ENCODE measurements at regions of chr20 and their contacts with region 1.

Region 1: DNA sequence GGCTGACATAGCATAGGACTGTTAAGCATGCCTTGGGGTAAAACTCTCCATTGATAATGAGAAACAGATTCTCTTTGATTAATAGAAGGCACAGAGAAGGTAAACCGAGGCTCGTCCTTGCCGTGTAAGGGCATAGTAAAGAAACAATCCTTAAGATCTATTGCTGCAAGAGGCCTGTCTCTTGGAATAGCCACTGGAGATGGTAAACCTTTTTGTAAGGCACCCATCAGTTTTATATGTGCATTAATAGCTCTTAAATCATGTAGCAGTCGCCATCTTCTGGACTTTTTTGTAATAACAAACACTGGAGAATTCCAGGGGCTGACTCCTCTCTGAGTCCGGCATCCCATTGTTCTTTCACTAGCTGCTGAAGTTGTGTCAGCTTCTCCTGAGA is 8.4 kb upstream of the ABHD12 start:
- DNase-seq: peak in 1 of 2 donors; percentile 26
- ATAC-seq: peak; percentile 86 to 92
- H3K4me3 ChIP-seq: no peak overlapping the region
- H3K27ac ChIP-seq: no peak overlapping the region
- H3K4me1 ChIP-seq: no peaks in the 10 kb centered on the region
- H3K27me3 ChIP-seq: no peaks in the 10 kb centered on the region
- CTCF ChIP-seq: peak; percentile 30 to 63 (median 55)
- POLR2A ChIP-seq: no peak

Region 2: DNA sequence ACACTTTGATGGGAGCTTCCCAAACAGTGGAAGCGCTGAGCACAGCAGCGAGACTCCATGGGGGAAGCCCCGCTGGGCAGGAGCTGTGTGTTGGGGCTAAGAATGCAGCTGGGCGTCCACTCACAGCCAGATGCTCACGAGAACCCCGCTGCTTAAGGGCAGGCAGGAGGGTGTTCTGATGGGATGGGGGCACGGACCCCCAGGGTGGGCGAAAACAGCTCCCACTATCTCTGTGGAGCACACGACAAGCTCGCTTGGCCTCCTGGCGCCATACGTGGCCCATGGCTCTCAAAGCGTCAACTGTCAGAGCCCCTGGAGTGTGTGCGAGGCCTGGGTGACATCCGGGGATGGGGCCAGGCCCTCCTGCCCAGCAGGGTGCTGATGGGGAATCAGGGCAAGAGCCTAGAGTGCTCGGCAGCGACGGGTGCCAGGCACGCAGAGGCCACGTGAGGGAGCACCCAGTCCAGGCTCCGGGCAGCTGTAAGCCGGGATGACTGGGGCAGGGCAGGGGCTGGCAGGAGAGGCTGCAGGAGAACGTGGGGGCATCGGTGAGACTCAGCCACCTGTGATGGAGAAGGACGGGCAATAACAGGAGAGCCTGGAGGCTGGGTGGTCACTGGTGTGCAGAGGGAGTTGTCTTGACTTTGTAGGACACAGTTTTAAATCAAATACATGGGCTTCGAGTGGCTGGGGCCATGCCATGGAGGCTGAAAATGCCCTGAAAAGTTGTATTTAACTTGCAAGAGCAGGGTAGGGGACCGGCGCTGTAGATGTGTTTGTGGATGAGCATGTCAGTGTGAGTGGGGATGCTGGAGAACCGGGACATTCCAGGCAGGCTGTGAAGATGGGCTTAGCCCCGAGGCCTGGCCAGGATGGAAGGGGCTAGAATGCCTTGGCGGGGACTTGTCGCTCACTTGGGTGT is 123.9 kb before region 1 on chr20:
- in situ Hi-C with region 1: loop called in 1 of 4 experiments (anchors 25 kb)
- intact Hi-C with region 1: loop called (anchors 1 kb)
- DNase-seq: peak in 1 of 2 donors; percentile 48
- ATAC-seq: no peak
- H3K4me3 ChIP-seq: peak overlapping the region in 2 of 4 donors; percentile 5 to 23
- H3K27ac ChIP-seq: peak overlapping the region in 3 of 4 donors; percentile 81 to 89 (median 89)
- H3K4me1 ChIP-seq: peaks cover 32 to 56% of the 10 kb centered on the region in 2 donors
- H3K27me3 ChIP-seq: no peaks in the 10 kb centered on the region
- CTCF ChIP-seq: no peak
- POLR2A ChIP-seq: no peak

Region 3: DNA sequence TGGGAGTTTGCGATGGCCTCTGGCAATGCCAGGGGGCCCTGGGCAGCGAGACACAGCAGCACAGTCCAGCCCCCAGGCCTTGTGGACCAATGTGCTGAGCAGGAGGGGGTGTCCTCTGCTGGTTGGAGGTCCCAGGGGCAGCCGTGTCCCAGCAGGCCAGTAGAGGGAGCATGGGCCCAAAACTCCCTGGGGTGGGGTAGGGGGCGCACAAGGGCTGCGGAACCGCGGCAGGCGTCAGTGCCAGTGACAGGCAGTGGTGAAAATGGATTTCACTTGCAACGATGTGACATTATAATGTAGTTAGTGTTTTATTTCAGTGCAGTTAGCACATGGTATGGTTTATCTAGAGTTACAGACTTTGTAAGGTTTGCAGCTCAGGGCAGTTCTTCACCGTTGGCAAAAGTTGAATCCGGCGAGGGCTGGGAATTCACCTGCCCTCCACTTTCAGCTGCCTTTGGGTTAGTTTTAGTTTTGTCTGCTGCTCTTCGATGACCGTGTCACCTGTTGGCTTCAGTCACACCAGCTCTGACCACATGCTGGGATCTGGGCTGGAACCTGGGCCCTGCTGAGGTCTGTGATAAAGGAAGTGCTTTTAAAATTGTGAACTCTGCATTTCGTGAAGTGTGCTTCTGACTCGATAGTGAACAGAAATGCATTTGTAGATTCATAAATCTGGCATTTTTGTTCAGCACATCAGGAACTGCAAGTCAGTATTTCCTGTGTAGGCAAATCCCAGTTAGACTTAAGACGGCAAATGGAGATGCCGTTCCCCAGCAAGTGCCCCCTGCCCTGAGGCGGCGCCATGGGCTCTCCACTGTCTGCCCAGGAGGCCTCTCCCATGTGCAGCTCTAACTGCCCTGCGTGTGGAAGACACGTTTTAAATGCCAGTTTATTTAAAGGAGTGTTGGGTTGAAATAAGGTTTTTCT is 104.3 kb before region 1 on chr20:
- in situ Hi-C with region 1: loop called in 2 of 4 experiments (anchors 10 kb)
- intact Hi-C with region 1: loop called (anchors 2 kb)
- DNase-seq: peak in 1 of 2 donors; percentile 48
- ATAC-seq: peak; percentile 19 to 28
- H3K4me3 ChIP-seq: no peak overlapping the region
- H3K27ac ChIP-seq: peak overlapping the region; percentile 46 to 85 (median 65)
- H3K4me1 ChIP-seq: peaks cover 26 to 32% of the 10 kb centered on the region in 2 donors
- H3K27me3 ChIP-seq: no peaks in the 10 kb centered on the region
- CTCF ChIP-seq: peak; percentile 51 to 80 (median 55)
- POLR2A ChIP-seq: no peak

Region 4: DNA sequence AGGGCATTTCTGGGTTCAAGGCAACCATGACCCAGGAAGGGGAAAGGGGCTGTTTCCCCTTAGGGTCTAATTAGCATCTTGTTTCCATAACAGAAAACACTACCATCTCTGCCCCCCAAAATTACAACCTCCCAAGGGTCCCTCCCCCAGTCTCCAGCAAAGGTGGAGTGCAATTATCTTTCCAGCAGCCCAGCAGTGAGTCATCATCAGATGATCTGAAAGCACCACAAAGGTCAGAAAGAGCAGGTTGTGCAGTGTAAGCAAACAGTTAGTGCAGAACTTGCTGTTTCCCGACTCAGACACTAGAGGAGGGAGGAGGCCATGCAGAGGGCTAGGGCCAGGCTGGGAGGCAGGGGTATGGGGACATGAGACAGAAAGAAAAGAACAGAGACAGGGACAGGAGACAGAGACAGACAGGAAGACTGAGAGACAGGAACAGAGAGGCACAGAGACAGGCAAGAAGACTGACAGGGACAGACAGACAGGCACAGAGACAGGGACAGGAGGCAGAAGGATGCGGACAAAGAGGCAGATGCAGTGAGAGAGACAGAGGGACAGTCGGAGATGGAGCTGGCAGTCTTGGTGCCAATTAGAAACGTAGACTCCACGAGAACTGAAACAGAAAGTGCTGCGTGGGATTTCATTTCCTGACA is 88.6 kb before region 1 on chr20:
- in situ Hi-C with region 1: loop called in 1 of 4 experiments (anchors 10 kb)
- intact Hi-C with region 1: loop called (anchors 1 kb)
- DNase-seq: peak; percentile 40 to 66
- ATAC-seq: peak; percentile 85 to 94
- H3K4me3 ChIP-seq: peak overlapping the region in 2 of 4 donors; percentile 17 to 24
- H3K27ac ChIP-seq: peak overlapping the region; percentile 55 to 72 (median 59)
- H3K4me1 ChIP-seq: peaks cover 18% of the 10 kb centered on the region in 2 donors
- H3K27me3 ChIP-seq: no peaks in the 10 kb centered on the region
- CTCF ChIP-seq: peak in 3 of 5 experiments; percentile 14 to 36 (median 32)
- POLR2A ChIP-seq: peak in 1 of 2 donors; percentile 21

Region 5: GRCh38 chr20:25486377-25486776 is 87.3 kb after region 1 on chr20:
- in situ Hi-C with region 1: no loop called
- intact Hi-C with region 1: no loop called
- DNase-seq: no peak
- ATAC-seq: no peak
- H3K4me3 ChIP-seq: no peak overlapping the region
- H3K27ac ChIP-seq: no peak overlapping the region
- H3K4me1 ChIP-seq: no peaks in the 10 kb centered on the region
- H3K27me3 ChIP-seq: no peaks in the 10 kb centered on the region
- CTCF ChIP-seq: no peak
- POLR2A ChIP-seq: no peak